A549 (cell line): ENCODE measurements at regions of chr12 and their contacts with region 1.

Region 1: GRCh38 chr12:52069327-52070184 is at the start of gene ATG101:
- DNase-seq: peak; percentile 98
- ATAC-seq: peak; percentile 93 to 95
- H3K4me3 ChIP-seq: peak within 1 kb of the TSS; percentile 100
- H3K27ac ChIP-seq: peak within 1 kb of the TSS; percentile 98 to 100
- H3K4me1 ChIP-seq: peaks cover 16% of the 10 kb centered on the region
- CTCF ChIP-seq: peak; percentile 54
- EP300 ChIP-seq: no peak
- POLR2A ChIP-seq: peak; percentile 92
- RAD21 ChIP-seq: peak in 1 of 2 experiments; percentile 20; a peak in 3 of 5 replicates
- polyA plus RNA-seq, gene ATG101: 124 and 141 TPM in 2 replicates

Region 2: DNA sequence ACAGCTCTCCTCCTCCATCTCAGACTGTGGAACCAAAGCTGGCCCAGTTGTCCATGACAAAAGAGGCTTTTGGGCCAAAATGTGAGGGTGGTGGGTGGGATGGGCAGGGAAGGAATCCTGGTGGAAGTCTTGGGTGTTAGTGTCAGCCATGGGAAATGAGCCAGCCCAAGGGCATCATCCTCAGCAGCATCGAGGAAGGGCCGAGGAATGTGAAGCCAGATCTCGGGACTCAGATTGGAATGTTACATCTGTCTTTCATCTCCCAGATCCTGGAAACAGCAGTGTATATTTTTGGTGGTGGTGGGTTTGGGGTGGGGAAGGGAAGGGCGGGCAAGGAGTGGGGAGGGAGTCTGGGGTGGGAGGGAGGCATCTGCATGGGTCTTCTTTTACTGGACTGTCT is 74.6 kb before region 1 on chr12:
- CTCF ChIA-PET with region 1: interaction called, 10 read pairs
- POLR2A ChIA-PET with region 1: no interaction called
- DNase-seq: no peak
- ATAC-seq: no peak
- H3K4me3 ChIP-seq: no peak overlapping the region
- H3K27ac ChIP-seq: no peak overlapping the region
- H3K4me1 ChIP-seq: peaks cover 4% of the 10 kb centered on the region; the same call in 2 of the 3 replicates
- CTCF ChIP-seq: no peak
- EP300 ChIP-seq: no peak
- POLR2A ChIP-seq: no peak
- RAD21 ChIP-seq: no peak

Region 3: DNA sequence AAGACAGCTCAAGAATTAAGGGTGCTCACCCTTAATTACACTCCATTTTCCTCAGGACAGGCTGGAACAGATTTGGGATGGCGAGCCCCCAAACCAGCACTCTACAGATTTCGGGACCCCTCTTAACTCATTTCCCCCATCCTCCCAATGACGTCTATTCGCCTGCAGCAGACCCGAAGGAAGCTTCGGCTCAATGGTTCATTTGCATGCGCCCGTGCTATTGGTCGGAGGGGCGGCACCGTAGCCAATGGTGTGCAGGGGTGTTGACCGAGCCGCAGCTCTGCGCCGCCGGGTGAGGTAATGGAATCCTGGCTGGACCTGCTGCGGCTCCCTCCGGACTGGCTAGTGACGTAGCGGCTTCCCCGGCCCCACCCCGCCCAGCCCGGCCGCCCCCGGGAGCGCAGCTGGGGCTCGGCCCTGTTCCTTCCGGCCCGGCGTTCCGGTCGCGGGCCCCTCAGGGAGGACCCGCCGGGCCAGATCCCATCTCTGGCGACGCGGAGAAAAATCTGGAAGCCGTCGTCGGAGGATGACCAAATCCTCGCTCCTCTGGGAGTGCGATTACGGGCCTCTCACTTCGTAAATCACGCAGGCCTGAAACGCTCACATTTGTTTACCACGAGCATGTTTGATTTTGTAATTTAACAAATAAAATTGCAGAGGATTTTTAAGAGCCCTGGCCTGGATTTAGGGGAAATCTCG is 36.6 kb before region 1 on chr12:
- CTCF ChIA-PET with region 1: interaction called, 1,730 read pairs
- POLR2A ChIA-PET with region 1: interaction called, 12 read pairs
- DNase-seq: peak; percentile 97
- ATAC-seq: peak; percentile 93 to 94
- H3K4me3 ChIP-seq: peak overlapping the region; percentile 32
- H3K27ac ChIP-seq: peak overlapping the region; percentile 65 to 77
- H3K4me1 ChIP-seq: peaks cover 28% of the 10 kb centered on the region
- CTCF ChIP-seq: no peak
- EP300 ChIP-seq: no peak
- POLR2A ChIP-seq: 0 out of 2 replicates have a peak, but pooled peaks have one; percentile 11
- RAD21 ChIP-seq: no peak

Region 4: GRCh38 chr12:52050761-52051541 is 18.6 kb before region 1 on chr12 and contains the start of gene NR4A1:
- CTCF ChIA-PET with region 1: interaction called, 1,730 read pairs
- POLR2A ChIA-PET with region 1: interaction called, 26 read pairs
- DNase-seq: peak; percentile 95 to 98
- ATAC-seq: peak; percentile 67 to 68
- H3K4me3 ChIP-seq: peak within 1 kb of the TSS; percentile 75
- H3K27ac ChIP-seq: peak within 1 kb of the TSS; percentile 90 to 95
- H3K4me1 ChIP-seq: peaks cover 38% of the 10 kb centered on the region
- CTCF ChIP-seq: peak; percentile 34
- EP300 ChIP-seq: peak; percentile 71 to 94
- POLR2A ChIP-seq: peak; percentile 94
- RAD21 ChIP-seq: peak in 1 of 2 experiments; percentile 42; a peak in 3 of 5 replicates
- polyA plus RNA-seq, gene NR4A1: 81.3 and 89.6 TPM in 2 replicates

Region 5: GRCh38 chr12:52058631-52059361 is 10.8 kb before region 1 on chr12:
- CTCF ChIA-PET with region 1: interaction called, 256 read pairs
- POLR2A ChIA-PET with region 1: interaction called, 9 read pairs
- DNase-seq: peak in 1 of 2 experiments; percentile 74
- ATAC-seq: no peak
- H3K4me3 ChIP-seq: no peak overlapping the region
- H3K27ac ChIP-seq: no peak overlapping the region
- H3K4me1 ChIP-seq: peaks cover 13% of the 10 kb centered on the region
- CTCF ChIP-seq: no peak
- EP300 ChIP-seq: no peak
- POLR2A ChIP-seq: no peak
- RAD21 ChIP-seq: no peak

Region 6: GRCh38 chr12:52082988-52083637 is 13.6 kb after region 1 on chr12:
- CTCF ChIA-PET with region 1: interaction called, 256 read pairs
- POLR2A ChIA-PET with region 1: interaction called, 8 read pairs
- DNase-seq: peak; percentile 57 to 85
- ATAC-seq: peak; percentile 54 to 76
- H3K4me3 ChIP-seq: no peak overlapping the region
- H3K27ac ChIP-seq: 0 out of 6 replicates have a peak overlapping the region, but pooled peaks of 1 of the 2 experiments have one; percentile 1
- H3K4me1 ChIP-seq: peaks cover 2% of the 10 kb centered on the region; the same call in 1 of the 3 replicates
- CTCF ChIP-seq: peak; percentile 95
- EP300 ChIP-seq: no peak
- POLR2A ChIP-seq: no peak
- RAD21 ChIP-seq: peak; percentile 86 to 91

Region 7: DNA sequence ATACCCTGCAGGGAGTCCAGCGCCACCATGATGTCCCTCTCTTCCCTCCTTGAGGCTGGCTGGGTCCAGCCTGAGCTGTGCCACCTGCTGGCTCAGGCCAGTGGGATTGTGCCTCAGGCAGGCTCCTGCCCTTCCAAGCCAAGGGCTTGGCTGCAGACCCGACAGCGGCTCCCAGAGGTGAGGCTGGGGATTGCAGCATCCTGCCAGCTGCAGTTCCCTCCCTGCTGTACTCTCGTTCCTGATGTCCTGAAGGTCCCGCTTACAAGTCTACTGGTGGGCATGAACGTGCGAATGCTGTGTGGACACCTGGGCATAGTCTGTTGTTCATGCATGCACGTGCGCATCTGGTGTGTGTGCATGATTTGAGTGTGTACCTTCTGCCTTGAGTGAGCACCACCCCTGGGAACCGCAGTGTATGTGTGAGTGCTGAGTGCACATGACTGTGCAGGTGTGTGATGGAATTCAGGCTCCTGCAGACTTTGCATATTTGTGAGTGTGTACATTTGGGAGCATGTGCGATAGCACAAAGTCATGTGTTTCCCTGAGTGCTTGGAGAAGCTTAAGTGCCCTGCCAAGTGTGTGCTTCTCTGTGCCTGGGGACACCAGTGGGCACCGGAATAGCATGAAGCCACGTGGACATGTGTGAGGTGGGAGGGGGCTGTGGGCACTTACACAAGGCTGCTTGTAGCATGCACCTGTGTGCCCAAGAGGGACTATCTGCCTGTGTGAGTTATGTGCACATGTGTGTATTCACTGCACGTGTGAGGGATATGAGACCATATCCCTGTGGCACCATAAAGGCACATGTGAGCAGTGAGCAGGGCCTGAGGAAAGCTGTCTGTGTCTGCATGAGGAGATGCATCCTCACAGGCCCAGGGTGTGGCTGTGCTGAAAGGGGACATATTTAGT is 144.2 kb after region 1 on chr12:
- CTCF ChIA-PET with region 1: no interaction called
- POLR2A ChIA-PET with region 1: no interaction called
- DNase-seq: peak; percentile 88 to 91
- ATAC-seq: peak; percentile 74 to 84
- H3K4me3 ChIP-seq: no peak overlapping the region
- H3K27ac ChIP-seq: peak overlapping the region; percentile 89 to 96
- H3K4me1 ChIP-seq: peaks cover 76% of the 10 kb centered on the region
- CTCF ChIP-seq: peak; percentile 97
- EP300 ChIP-seq: no peak
- POLR2A ChIP-seq: no peak
- RAD21 ChIP-seq: peak; percentile 97 to 98